Astrocyte of the cerebellum (primary cell): ENCODE measurements at regions of chr13 and their contacts with region 1.

Region 1: DNA sequence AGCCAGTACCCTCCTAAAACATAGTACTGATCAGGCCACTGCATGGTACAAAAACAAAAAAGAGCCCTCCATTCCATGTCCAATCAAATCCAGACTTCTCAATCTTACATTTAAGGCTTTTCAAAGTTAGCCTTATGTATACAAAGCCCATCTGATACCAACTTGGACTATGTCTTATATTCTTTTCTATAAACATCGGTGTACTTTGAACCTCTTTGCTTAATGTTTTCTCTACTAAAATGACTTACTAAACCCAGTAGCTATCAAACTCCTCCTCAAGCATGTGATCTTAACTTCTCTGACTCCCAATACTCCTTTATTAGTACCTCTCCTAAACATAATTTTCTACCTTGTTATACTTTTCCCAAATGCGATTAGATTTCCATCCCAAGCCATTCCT is 14.8 kb downstream of the TSC22D1 start:
- DNase-seq: no peak
- H3K4me3 ChIP-seq: no peak overlapping the region
- CTCF ChIP-seq: no peak

Region 2: DNA sequence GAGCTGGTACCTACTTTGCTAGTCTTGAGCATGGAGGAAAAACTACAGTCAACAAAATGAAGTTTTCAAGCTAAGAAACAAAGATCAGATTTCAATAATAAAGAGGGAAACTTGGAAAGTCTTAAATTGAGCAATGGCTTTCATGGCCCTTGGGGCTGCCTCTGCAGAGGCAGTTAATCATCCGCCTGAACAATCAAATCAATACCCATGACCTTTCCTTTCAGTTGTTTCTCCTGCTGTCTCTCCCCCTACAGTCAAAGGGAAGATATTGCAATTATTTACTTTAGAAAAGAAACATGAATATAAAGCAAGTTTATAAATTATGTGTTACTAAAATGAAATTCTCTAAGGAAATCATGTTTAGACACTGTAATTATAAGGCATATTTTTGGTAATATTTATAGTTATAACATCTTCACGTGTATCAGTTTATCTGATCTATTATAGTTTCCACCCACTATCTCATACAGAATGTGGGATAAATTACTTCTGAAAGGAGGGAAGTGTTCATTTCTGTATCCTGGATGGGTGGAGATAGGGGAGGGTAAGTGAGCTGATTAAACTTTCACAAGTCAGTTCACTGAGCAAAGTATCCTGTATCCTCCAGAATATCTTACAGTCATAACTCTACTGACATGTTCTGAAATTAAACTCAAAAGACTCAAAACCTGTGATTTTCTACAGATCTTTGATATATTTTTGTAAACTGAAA is 87.2 kb after region 1 on chr13:
- in situ Hi-C with region 1: loop called (anchors 5 kb)
- DNase-seq: no peak
- H3K4me3 ChIP-seq: no peak overlapping the region
- CTCF ChIP-seq: peak; percentile 30